GM12878 (cell line): ENCODE measurements at regions of chr17 and their contacts with region 1.

Region 1: GRCh38 chr17:29546085-29546484 is 20.8 kb downstream of the ABHD15 start:
- DNase-seq: no peak
- ATAC-seq: no peak
- H3K4me3 ChIP-seq: no peak overlapping the region
- H3K27ac ChIP-seq: no peak overlapping the region
- H3K4me1 ChIP-seq: peaks cover 9% of the 10 kb centered on the region; the same call in 1 of the 2 replicates
- H3K27me3 ChIP-seq: no peaks in the 10 kb centered on the region
- CTCF ChIP-seq: no peak
- EP300 ChIP-seq: no peak
- POLR2A ChIP-seq: no peak
- RAD21 ChIP-seq: no peak

Region 2: GRCh38 chr17:29533976-29534375 is 12.1 kb before region 1 on chr17:
- CTCF ChIA-PET with region 1: interaction called, 13 read pairs
- POLR2A ChIA-PET with region 1: interaction called, 5 read pairs
- RAD21 ChIA-PET with region 1: interaction called, 3 read pairs
- SMC1A ChIA-PET with region 1: interaction called, 6 read pairs
- in situ Hi-C with region 1: no loop called
- intact Hi-C with region 1: no loop called
- DNase-seq: no peak
- ATAC-seq: no peak
- H3K4me3 ChIP-seq: no peak overlapping the region
- H3K27ac ChIP-seq: no peak overlapping the region
- H3K4me1 ChIP-seq: no peaks in the 10 kb centered on the region
- H3K27me3 ChIP-seq: no peaks in the 10 kb centered on the region
- CTCF ChIP-seq: no peak
- EP300 ChIP-seq: no peak
- POLR2A ChIP-seq: no peak
- RAD21 ChIP-seq: no peak

Region 3: DNA sequence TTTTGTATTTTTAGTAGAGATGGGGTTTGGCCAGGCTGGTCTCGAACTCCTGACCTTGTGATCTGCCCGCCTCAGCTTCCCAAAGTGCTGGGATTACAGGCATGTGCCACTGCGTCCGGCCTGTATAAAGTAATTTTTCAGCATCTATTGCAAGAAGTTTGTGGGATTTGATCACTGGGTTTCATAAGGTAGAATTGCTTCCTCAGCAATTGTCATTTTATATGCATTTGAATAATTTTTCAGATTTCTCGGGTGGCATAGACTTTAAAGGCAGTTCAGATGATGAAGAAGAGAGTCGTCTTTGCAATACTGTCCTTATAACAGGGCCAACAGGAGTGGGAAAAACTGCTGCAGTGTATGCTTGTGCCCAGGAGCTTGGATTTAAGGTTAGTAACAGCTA is 1322.9 kb after region 1 on chr17:
- CTCF ChIA-PET with region 1: no interaction called
- POLR2A ChIA-PET with region 1: no interaction called
- RAD21 ChIA-PET with region 1: no interaction called
- SMC1A ChIA-PET with region 1: no interaction called
- in situ Hi-C with region 1: no loop called
- intact Hi-C with region 1: no loop called
- DNase-seq: no peak
- ATAC-seq: no peak
- H3K4me3 ChIP-seq: no peak overlapping the region
- H3K27ac ChIP-seq: no peak overlapping the region
- H3K4me1 ChIP-seq: no peaks in the 10 kb centered on the region
- H3K27me3 ChIP-seq: no peaks in the 10 kb centered on the region
- CTCF ChIP-seq: no peak
- EP300 ChIP-seq: no peak
- POLR2A ChIP-seq: no peak
- RAD21 ChIP-seq: no peak

Region 4: GRCh38 chr17:31448467-31449077 is 1902.5 kb after region 1 on chr17:
- CTCF ChIA-PET with region 1: no interaction called
- POLR2A ChIA-PET with region 1: no interaction called
- RAD21 ChIA-PET with region 1: no interaction called
- SMC1A ChIA-PET with region 1: no interaction called
- in situ Hi-C with region 1: no loop called
- intact Hi-C with region 1: no loop called
- DNase-seq: no peak
- ATAC-seq: no peak
- H3K4me3 ChIP-seq: no peak overlapping the region
- H3K27ac ChIP-seq: no peak overlapping the region
- H3K4me1 ChIP-seq: peaks cover 7% of the 10 kb centered on the region
- H3K27me3 ChIP-seq: no peaks in the 10 kb centered on the region
- CTCF ChIP-seq: no peak
- EP300 ChIP-seq: no peak
- POLR2A ChIP-seq: no peak
- RAD21 ChIP-seq: no peak